IMR-90 (cell line): ENCODE measurements at regions of chr10 and their contacts with region 1.

Region 1: DNA sequence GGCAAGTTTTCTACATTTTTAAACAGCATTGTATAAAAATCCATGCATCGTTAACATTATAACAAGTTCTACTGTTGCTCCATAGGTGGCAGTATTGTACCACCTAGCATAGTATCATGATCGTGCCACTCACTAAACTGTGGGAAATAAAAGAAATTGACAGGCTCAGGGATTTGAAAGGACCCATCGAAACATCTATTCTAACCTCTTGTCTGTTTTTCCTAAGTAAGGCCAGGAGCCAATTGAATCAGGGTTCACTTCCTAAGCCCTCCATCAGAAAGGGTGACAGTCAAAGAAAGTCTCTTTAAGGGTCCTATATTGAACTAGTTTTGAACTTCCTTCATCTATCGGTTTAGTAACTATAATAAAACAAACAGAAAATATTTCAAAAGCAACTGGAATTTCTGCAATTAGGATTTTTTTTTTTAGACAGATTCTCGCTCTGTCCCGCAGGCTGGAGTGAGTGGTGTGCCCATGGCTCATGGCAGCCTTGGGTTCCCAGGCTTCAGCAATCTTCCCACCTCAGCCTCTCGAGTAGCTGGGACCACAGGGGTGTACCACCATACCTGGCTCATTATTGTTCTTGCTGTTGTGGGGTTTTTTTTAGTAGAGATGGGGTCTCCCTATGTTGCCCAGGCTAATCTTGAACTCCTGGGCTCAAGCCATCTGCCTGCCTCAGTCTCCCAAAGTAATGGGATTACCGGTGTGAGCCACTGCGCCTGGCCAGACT is 9.4 kb downstream of the HACD1 start:
- DNase-seq: peak; percentile 68
- ATAC-seq: peak; percentile 94
- H3K4me3 ChIP-seq: no peak overlapping the region
- H3K27ac ChIP-seq: no peak overlapping the region
- H3K4me1 ChIP-seq: no peaks in the 10 kb centered on the region
- H3K27me3 ChIP-seq: no peaks in the 10 kb centered on the region
- CTCF ChIP-seq: peak; percentile 97
- POLR2A ChIP-seq: no peak
- RAD21 ChIP-seq: peak; percentile 94

Region 2: GRCh38 chr10:17742918-17743317 is 135.2 kb after region 1 on chr10:
- CTCF ChIA-PET with region 1: no interaction called
- POLR2A ChIA-PET with region 1: no interaction called
- dilution Hi-C with region 1: no loop called
- in situ Hi-C with region 1: loop called (anchors 5 kb)
- intact Hi-C with region 1: loop called (anchors 1 kb)
- DNase-seq: peak; percentile 60
- ATAC-seq: peak; percentile 85
- H3K4me3 ChIP-seq: no peak overlapping the region
- H3K27ac ChIP-seq: no peak overlapping the region
- H3K4me1 ChIP-seq: no peaks in the 10 kb centered on the region
- H3K27me3 ChIP-seq: no peaks in the 10 kb centered on the region
- CTCF ChIP-seq: peak; percentile 72
- POLR2A ChIP-seq: no peak
- RAD21 ChIP-seq: peak; percentile 51

Region 3: GRCh38 chr10:18104223-18104872 is 496.6 kb after region 1 on chr10:
- CTCF ChIA-PET with region 1: no interaction called
- POLR2A ChIA-PET with region 1: no interaction called
- dilution Hi-C with region 1: no loop called
- in situ Hi-C with region 1: loop called (anchors 10 kb)
- intact Hi-C with region 1: loop called (anchors 5 kb)
- DNase-seq: peak; percentile 43
- ATAC-seq: peak; percentile 44; the same call in 1 of the 2 replicates
- H3K4me3 ChIP-seq: no peak overlapping the region
- H3K27ac ChIP-seq: no peak overlapping the region
- H3K4me1 ChIP-seq: no peaks in the 10 kb centered on the region
- H3K27me3 ChIP-seq: peaks cover 32% of the 10 kb centered on the region
- CTCF ChIP-seq: peak; percentile 64
- POLR2A ChIP-seq: no peak
- RAD21 ChIP-seq: peak; percentile 65

Region 4: DNA sequence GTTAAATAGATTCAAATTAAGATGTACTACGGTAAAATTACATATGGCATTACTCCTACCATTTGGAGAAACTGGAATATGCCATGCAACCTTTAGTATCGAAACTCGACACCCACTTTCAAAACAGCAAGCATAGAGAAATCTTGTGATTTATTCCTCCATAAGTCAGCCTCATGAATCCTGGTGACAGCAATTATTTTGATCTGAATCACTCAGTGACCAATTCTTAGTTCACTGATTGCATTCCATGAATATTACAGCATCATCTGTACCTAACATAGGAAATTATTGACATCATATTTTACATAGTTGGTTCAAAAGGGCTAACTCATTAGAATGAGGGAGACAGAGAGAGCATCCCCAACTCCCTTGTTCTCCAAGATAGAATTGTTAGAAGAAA is 622.1 kb after region 1 on chr10:
- CTCF ChIA-PET with region 1: no interaction called
- POLR2A ChIA-PET with region 1: no interaction called
- dilution Hi-C with region 1: no loop called
- in situ Hi-C with region 1: loop called (anchors 10 kb)
- intact Hi-C with region 1: no loop called
- DNase-seq: peak; percentile 68
- ATAC-seq: peak; percentile 73
- H3K4me3 ChIP-seq: no peak overlapping the region
- H3K27ac ChIP-seq: no peak overlapping the region
- H3K4me1 ChIP-seq: no peaks in the 10 kb centered on the region
- H3K27me3 ChIP-seq: no peaks in the 10 kb centered on the region
- CTCF ChIP-seq: no peak
- POLR2A ChIP-seq: no peak
- RAD21 ChIP-seq: no peak